ENCODE measurements at regions of chr6 and their contacts with region 1.

Region 1: GRCh38 chr6:31769684-31770371 is 7.3 kb downstream of the VWA7 start:
- DNase-seq: peak; percentile 78
- H3K4me3 Mint-ChIP-seq: no peak overlapping the region
- H3K27ac Mint-ChIP-seq: peak overlapping the region; percentile 0
- H3K4me1 Mint-ChIP-seq: peaks cover 50% of the 10 kb centered on the region
- H3K27me3 Mint-ChIP-seq: no peaks in the 10 kb centered on the region

Region 2: DNA sequence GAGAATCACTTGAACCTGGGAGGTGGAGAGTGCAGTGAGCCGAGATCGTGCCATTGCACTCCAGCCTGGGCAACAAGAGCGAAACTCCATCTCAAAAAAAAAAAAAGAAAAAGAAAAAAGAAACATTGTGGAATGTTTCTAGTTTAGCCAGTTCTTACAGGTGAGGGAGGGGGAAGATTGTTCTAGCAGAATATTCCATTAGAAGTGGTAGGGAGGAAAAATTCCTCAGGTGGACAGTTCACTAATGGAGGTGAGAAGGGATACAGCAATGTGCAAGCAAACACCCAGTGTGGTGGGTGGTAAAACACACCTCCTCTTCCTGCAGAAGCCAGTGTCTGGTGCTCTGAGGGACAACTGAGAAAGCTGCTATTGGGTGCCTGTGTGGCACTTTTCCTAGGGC is 73.3 kb before region 1 on chr6:
- CTCF ChIA-PET with region 1: no interaction called
- POLR2A ChIA-PET with region 1: no interaction called
- DNase-seq: no peak
- H3K4me3 Mint-ChIP-seq: no peak overlapping the region
- H3K27ac Mint-ChIP-seq: no peak overlapping the region
- H3K4me1 Mint-ChIP-seq: peaks cover 21% of the 10 kb centered on the region
- H3K27me3 Mint-ChIP-seq: no peaks in the 10 kb centered on the region

Region 3: DNA sequence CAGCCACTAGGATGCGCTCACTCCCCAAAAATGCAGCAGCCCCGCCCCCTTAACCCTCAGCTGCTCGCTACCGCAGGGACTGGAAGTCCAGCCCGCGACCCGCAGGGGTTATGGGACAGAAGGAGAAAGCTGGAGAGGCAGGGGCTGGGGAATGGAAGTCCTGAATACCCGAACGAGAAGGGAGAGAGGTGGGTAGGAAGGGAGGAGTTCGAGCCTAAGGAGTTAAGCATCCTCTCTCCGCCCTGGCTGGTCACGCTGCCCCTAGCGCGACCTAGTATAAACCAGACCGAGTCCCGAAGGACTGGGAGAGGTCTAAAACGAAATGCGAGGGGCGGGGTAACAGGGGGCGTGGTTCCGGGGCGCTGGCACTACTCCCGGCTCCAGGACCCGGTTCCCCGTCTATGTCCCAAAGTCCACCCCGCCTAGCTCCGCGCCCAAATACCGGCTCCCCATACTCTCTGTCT is 40.3 kb before region 1 on chr6:
- CTCF ChIA-PET with region 1: interaction called, 16 read pairs
- POLR2A ChIA-PET with region 1: no interaction called
- DNase-seq: peak; percentile 80
- H3K4me3 Mint-ChIP-seq: peak overlapping the region; percentile 85
- H3K27ac Mint-ChIP-seq: peak overlapping the region; percentile 76
- H3K4me1 Mint-ChIP-seq: peaks cover 80% of the 10 kb centered on the region
- H3K27me3 Mint-ChIP-seq: no peaks in the 10 kb centered on the region

Region 4: DNA sequence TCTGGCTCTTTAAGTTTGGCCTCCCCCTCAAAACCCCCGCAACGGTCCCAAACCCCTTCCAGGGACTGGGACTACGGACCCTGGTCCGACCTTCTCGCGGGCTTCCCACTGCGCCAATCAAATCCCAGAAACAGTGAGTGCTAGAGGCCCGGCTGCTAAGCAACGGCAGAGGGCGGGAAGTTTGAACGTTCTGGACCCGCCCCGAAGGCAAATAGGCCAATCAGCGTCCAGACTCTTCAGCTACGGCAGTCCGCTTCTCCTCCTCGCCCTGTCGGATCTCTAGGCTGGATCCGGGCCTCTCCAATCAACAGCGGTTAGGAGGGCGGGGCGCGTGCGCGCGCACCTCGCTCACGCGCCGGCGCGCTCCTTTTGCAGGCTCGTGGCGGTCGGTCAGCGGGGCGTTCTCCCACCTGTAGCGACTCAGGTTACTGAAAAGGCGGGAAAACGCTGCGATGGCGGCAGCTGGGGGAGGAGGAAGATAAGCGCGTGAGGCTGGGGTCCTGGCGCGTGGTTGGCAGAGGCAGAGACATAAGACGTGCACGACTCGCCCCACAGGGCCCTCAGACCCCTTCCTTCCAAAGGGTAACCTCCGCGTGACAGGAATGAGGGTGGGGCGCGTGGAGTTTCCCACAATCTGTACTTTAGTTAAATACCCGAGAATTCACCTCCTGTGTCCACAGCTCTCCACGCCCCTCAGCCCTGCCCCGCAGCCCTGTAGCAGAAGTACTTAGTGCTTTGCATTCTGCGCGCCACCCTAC is 30.0 kb before region 1 on chr6 and contains the start of gene MSH5:
- CTCF ChIA-PET with region 1: interaction called, 26 read pairs
- POLR2A ChIA-PET with region 1: no interaction called
- DNase-seq: peak; percentile 98
- H3K4me3 Mint-ChIP-seq: peak within 1 kb of the TSS; percentile 94
- H3K27ac Mint-ChIP-seq: peak within 1 kb of the TSS; percentile 96
- H3K4me1 Mint-ChIP-seq: peaks cover 56% of the 10 kb centered on the region
- H3K27me3 Mint-ChIP-seq: no peaks in the 10 kb centered on the region
- total RNA-seq, gene MSH5: 56.1 to 58.0 TPM

Region 5: GRCh38 chr6:31752739-31753319 is 17.0 kb before region 1 on chr6:
- CTCF ChIA-PET with region 1: interaction called, 30 read pairs
- POLR2A ChIA-PET with region 1: interaction called, 5 read pairs
- DNase-seq: no peak
- H3K4me3 Mint-ChIP-seq: no peak overlapping the region
- H3K27ac Mint-ChIP-seq: no peak overlapping the region
- H3K4me1 Mint-ChIP-seq: no peaks in the 10 kb centered on the region
- H3K27me3 Mint-ChIP-seq: no peaks in the 10 kb centered on the region

Region 6: GRCh38 chr6:31784098-31784925 is 14.5 kb after region 1 on chr6:
- CTCF ChIA-PET with region 1: interaction called, 29 read pairs
- POLR2A ChIA-PET with region 1: no interaction called
- DNase-seq: no peak
- H3K4me3 Mint-ChIP-seq: no peak overlapping the region
- H3K27ac Mint-ChIP-seq: peak overlapping the region; percentile 47
- H3K4me1 Mint-ChIP-seq: peaks cover 3% of the 10 kb centered on the region
- H3K27me3 Mint-ChIP-seq: no peaks in the 10 kb centered on the region

Region 7: GRCh38 chr6:31795616-31796298 is 25.9 kb after region 1 on chr6 and contains the start of gene VARS1:
- CTCF ChIA-PET with region 1: interaction called, 11 read pairs
- POLR2A ChIA-PET with region 1: no interaction called
- DNase-seq: peak; percentile 81
- H3K4me3 Mint-ChIP-seq: peak within 1 kb of the TSS; percentile 94
- H3K27ac Mint-ChIP-seq: peak within 1 kb of the TSS; percentile 98
- H3K4me1 Mint-ChIP-seq: peaks cover 56% of the 10 kb centered on the region
- H3K27me3 Mint-ChIP-seq: no peaks in the 10 kb centered on the region
- total RNA-seq, gene VARS1: 85.0 to 100 TPM

Region 8: DNA sequence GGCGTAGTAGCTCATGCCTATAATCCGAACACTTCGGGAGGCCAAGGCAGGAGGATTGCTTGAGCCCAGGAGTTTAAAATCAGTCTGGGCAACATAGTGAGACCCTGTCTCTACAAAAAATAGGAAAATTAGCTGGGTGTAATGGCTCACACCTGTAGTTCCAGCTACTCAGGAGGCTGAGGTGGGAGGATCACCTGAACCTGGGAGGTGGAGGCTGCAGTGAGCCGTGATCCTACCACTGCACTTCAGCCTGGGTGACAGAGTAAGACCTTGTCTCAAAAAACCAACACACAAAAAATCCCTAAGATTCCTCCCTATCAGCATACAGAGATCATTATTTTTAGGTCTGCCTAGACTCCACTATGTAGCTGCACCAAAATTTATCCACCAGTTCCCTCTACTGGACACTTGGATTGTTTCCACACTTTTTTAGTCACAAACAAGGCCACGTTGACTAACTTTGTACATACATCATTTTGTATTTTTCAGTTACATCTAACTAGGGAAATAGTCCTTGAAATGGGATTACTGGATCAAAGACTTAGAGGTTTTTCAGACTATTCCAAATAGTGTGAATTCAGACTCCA is 1637.4 kb after region 1 on chr6:
- CTCF ChIA-PET with region 1: no interaction called
- POLR2A ChIA-PET with region 1: no interaction called
- DNase-seq: no peak
- H3K4me3 Mint-ChIP-seq: no peak overlapping the region
- H3K27ac Mint-ChIP-seq: no peak overlapping the region
- H3K4me1 Mint-ChIP-seq: peaks cover 52% of the 10 kb centered on the region
- H3K27me3 Mint-ChIP-seq: no peaks in the 10 kb centered on the region

Measured in activated CD4-positive, alpha-beta T cell treated with anti-CD3 and anti-CD28 coated beads, Interleukin-2, amount 10 ng/mL, durations not matched to agents 7 days and 5 days (primary cell).